ENCODE measurements at regions of chr10 and their contacts with region 1.

Region 1: GRCh38 chr10:124530215-124530665 is 68.6 kb downstream of the LHPP start:
- DNase-seq: peak; percentile 52 to 91
- H3K4me3 ChIP-seq: no peak overlapping the region
- H3K27ac ChIP-seq: no peak overlapping the region
- H3K4me1 ChIP-seq: no peaks in the 10 kb centered on the region
- H3K27me3 ChIP-seq: no peaks in the 10 kb centered on the region
- CTCF ChIP-seq: peak; percentile 81 to 95 (median 88)

Region 2: GRCh38 chr10:124827474-124827873 is 297.2 kb after region 1 on chr10:
- intact Hi-C with region 1: loop called (anchors 5 kb)
- DNase-seq: no peak
- H3K4me3 ChIP-seq: no peak overlapping the region
- H3K27ac ChIP-seq: no peak overlapping the region
- H3K4me1 ChIP-seq: no peaks in the 10 kb centered on the region
- H3K27me3 ChIP-seq: no peaks in the 10 kb centered on the region
- CTCF ChIP-seq: peak in 2 of 3 experiments; percentile 12 to 52

Measured in ascending aorta (tissue), 2 donors.